K562 (cell line): ENCODE measurements at regions of chr7 and their contacts with region 1.

Region 1: GRCh38 chr7:123319911-123320310 is 120.1 kb upstream of the SLC13A1 start:
- DNase-seq: no peak
- ATAC-seq: no peak
- H3K4me3 ChIP-seq: no peak overlapping the region
- H3K27ac ChIP-seq: no peak overlapping the region
- H3K4me1 ChIP-seq: no peaks in the 10 kb centered on the region
- H3K27me3 ChIP-seq: no peaks in the 10 kb centered on the region
- CTCF ChIP-seq: no peak
- EP300 ChIP-seq: no peak
- POLR2A ChIP-seq: no peak
- RAD21 ChIP-seq: no peak

Region 2: GRCh38 chr7:123208793-123209192 is 111.1 kb before region 1 on chr7:
- CTCF ChIA-PET with region 1: no interaction called
- POLR2A ChIA-PET with region 1: no interaction called
- in situ Hi-C with region 1: no loop called
- intact Hi-C with region 1: no loop called
- DNase-seq: no peak
- ATAC-seq: no peak
- H3K4me3 ChIP-seq: no peak overlapping the region
- H3K27ac ChIP-seq: no peak overlapping the region
- H3K4me1 ChIP-seq: no peaks in the 10 kb centered on the region
- H3K27me3 ChIP-seq: no peaks in the 10 kb centered on the region
- CTCF ChIP-seq: no peak
- EP300 ChIP-seq: no peak
- POLR2A ChIP-seq: no peak
- RAD21 ChIP-seq: no peak

Region 3: DNA sequence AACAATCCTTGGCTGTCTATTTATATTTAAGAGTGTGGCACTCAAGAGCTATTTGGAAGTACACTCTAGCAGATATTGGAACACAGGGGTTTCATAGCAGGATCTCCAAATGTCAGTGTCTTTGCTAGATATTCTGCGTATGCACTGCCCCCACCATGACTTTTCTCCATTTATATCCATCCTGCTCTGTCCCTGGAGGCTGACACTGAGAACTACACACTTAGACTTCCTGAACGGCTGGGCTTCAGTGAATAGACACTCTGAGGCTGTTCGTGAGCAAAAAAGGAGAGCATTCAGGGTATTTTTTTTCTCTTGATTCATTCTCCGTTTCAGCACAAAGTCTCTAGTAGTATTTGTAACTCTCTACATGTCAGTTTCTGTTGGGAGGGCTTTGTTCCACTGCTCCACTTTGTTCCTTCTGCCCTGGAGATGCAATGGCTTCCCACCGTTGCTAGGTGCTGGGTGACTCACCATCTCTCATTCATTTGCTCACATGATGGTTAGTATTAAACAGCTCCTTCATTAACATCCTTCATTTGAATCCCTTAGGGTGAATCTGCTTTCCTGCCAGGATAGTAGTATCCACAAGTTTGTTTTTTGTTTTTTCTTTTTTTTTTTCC is 35.8 kb after region 1 on chr7:
- CTCF ChIA-PET with region 1: no interaction called
- POLR2A ChIA-PET with region 1: no interaction called
- in situ Hi-C with region 1: no loop called
- intact Hi-C with region 1: loop called (anchors 5 kb)
- DNase-seq: no peak
- ATAC-seq: no peak
- H3K4me3 ChIP-seq: no peak overlapping the region
- H3K27ac ChIP-seq: no peak overlapping the region
- H3K4me1 ChIP-seq: no peaks in the 10 kb centered on the region
- H3K27me3 ChIP-seq: no peaks in the 10 kb centered on the region
- CTCF ChIP-seq: no peak
- EP300 ChIP-seq: no peak
- POLR2A ChIP-seq: no peak
- RAD21 ChIP-seq: no peak